CD4-positive, alpha-beta T cell (primary cell): ENCODE measurements at regions of chr1 and their contacts with region 1.

Region 1: DNA sequence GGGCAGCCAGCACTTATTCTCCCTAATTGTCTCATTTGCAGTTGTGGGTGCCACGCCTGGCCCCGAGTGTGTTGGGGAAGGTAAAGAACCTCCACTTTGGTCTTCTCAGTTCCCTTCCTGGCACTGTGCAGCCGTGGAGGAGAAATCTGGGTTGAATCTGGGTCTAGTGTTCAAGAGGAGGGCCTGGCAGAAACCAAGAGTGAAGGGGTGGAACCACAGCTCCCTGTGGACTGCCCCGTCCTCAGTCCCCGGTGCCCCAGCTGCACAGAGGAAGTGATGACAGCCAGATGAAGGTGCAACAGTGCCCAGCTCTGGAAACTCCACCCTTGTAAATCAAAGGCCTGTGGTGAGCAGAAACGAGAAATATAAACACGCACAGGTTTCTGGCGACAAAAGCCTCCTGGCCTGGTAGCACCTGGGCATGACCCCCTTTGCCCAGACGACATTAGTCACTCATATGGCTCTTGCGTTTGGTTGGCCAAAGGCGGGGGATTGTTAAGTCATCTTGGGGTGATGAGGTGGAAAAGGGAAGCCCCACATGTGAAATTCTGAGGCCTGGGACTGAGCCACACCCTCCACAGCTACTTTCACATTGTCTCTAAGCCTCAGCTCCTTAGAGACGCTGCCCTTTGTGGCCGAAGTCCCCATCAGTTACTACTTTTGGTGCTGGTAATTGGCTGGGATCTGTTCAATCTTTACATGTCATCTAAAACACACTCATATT is 4.2 kb upstream of the ECE1 start:
- DNase-seq: peak; percentile 74 to 98 (median 84)
- ATAC-seq: peak; percentile 75
- H3K4me3 ChIP-seq: peak overlapping the region; percentile 61
- H3K4me3 Mint-ChIP-seq: peak overlapping the region; percentile 88
- H3K27ac ChIP-seq: peak overlapping the region; percentile 89 to 95
- H3K27ac Mint-ChIP-seq: peak overlapping the region; percentile 96
- H3K4me1 ChIP-seq: peaks cover 94% of the 10 kb centered on the region
- H3K4me1 Mint-ChIP-seq: peaks cover 80% of the 10 kb centered on the region
- H3K27me3 ChIP-seq: no peaks in the 10 kb centered on the region
- H3K27me3 Mint-ChIP-seq: no peaks in the 10 kb centered on the region
- CTCF ChIP-seq: no peak

Region 2: GRCh38 chr1:20896871-20897223 is 397.6 kb before region 1 on chr1:
- CTCF ChIA-PET with region 1: no interaction called
- POLR2A ChIA-PET with region 1: no interaction called
- intact Hi-C with region 1: no loop called
- DNase-seq: no peak
- ATAC-seq: no peak
- H3K4me3 ChIP-seq: no peak overlapping the region
- H3K4me3 Mint-ChIP-seq: no peak overlapping the region
- H3K27ac ChIP-seq: no peak overlapping the region
- H3K27ac Mint-ChIP-seq: no peak overlapping the region
- H3K4me1 ChIP-seq: no peaks in the 10 kb centered on the region
- H3K4me1 Mint-ChIP-seq: no peaks in the 10 kb centered on the region
- H3K27me3 ChIP-seq: no peaks in the 10 kb centered on the region
- H3K27me3 Mint-ChIP-seq: no peaks in the 10 kb centered on the region
- CTCF ChIP-seq: no peak

Region 3: DNA sequence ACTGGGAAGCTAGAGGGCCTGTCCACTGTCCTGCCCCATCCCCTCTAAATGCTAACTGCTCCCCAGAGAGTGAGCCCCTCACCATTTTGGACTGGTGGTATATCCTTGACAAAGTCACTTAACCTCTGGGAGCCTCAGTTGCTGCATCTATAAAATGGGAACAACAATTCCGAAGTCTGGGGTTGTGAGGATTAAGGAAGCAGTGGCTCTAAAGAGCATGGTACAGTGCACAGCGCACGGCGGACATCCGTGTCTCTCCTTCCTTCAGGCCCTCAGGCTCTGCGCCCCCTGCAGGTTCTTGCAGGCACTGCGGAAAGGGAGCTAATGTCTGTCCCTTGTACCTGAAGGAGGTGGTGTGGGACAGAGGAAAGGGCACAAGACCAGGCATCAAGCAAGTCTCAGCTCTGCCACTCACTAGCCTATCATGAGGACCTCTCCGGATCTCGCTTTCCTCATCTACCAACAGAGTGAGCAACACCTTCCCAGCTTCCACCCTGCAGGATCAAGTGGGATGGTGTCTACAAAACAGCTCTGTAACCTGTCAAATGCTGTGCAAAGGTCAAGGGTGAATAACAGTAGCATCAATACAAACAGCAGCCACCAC is 24.2 kb before region 1 on chr1:
- CTCF ChIA-PET with region 1: interaction called, 80 read pairs
- POLR2A ChIA-PET with region 1: interaction called, 42 read pairs
- intact Hi-C with region 1: no loop called
- DNase-seq: peak; percentile 78 to 89 (median 84)
- ATAC-seq: peak; percentile 93
- H3K4me3 ChIP-seq: no peak overlapping the region
- H3K4me3 Mint-ChIP-seq: no peak overlapping the region
- H3K27ac ChIP-seq: no peak overlapping the region
- H3K27ac Mint-ChIP-seq: peak overlapping the region; percentile 9
- H3K4me1 ChIP-seq: peaks cover 17% of the 10 kb centered on the region
- H3K4me1 Mint-ChIP-seq: peaks cover 33% of the 10 kb centered on the region
- H3K27me3 ChIP-seq: no peaks in the 10 kb centered on the region
- H3K27me3 Mint-ChIP-seq: no peaks in the 10 kb centered on the region
- CTCF ChIP-seq: peak; percentile 89

Region 4: GRCh38 chr1:21308847-21309652 is 14.6 kb after region 1 on chr1:
- CTCF ChIA-PET with region 1: no interaction called
- POLR2A ChIA-PET with region 1: interaction called, 21 read pairs
- intact Hi-C with region 1: no loop called
- DNase-seq: no peak
- ATAC-seq: no peak
- H3K4me3 ChIP-seq: no peak overlapping the region
- H3K4me3 Mint-ChIP-seq: no peak overlapping the region
- H3K27ac ChIP-seq: no peak overlapping the region
- H3K27ac Mint-ChIP-seq: peak overlapping the region; percentile 55
- H3K4me1 ChIP-seq: peaks cover 67% of the 10 kb centered on the region
- H3K4me1 Mint-ChIP-seq: peaks cover 77% of the 10 kb centered on the region
- H3K27me3 ChIP-seq: no peaks in the 10 kb centered on the region
- H3K27me3 Mint-ChIP-seq: no peaks in the 10 kb centered on the region
- CTCF ChIP-seq: no peak

Region 5: DNA sequence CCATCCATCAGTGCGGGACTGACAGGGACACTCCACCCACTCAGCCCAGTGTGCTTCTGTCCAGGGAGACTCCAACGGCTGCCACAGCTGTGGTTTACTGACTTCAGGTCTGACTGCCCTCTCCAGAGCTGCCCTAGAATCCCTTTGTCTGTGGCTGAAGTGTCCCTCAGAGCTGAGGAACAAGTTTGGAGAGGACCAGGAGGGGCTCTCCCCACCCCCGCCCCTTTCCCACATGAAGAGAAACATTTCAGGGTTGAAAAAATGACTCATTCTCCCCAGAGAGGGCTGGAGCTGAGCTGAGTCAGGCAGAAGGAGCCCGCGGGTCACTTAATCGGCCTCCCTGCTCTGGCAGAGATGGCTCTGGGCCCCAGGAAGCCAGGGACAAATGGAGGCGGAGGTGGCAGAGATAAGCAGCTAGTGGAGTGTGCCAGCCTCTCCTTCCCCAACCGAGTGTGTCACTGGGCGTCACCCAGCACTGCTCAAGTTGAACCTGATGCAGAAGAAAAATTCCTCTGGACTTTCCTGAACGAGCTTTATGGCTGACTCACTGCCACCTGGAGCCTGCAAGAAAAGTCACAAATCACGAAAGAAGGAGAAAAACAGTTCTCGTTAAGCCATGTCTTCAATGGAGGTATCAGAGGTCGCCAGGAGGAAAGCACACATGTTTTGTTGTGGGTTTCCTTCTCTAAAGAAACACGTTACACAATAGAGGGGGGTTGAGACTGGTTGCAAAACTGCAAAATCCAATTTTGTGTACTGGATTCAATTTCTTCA is 30.1 kb after region 1 on chr1:
- CTCF ChIA-PET with region 1: interaction called, 8 read pairs
- POLR2A ChIA-PET with region 1: interaction called, 205 read pairs
- intact Hi-C with region 1: loop called (anchors 1 to 2 kb)
- DNase-seq: peak in 12 of 14 experiments; percentile 35 to 83 (median 52)
- ATAC-seq: peak; percentile 65
- H3K4me3 ChIP-seq: peak overlapping the region; percentile 24
- H3K4me3 Mint-ChIP-seq: peak overlapping the region; percentile 70
- H3K27ac ChIP-seq: peak overlapping the region; percentile 73 to 76
- H3K27ac Mint-ChIP-seq: peak overlapping the region; percentile 93
- H3K4me1 ChIP-seq: peaks cover 77% of the 10 kb centered on the region
- H3K4me1 Mint-ChIP-seq: peaks cover 88% of the 10 kb centered on the region
- H3K27me3 ChIP-seq: no peaks in the 10 kb centered on the region
- H3K27me3 Mint-ChIP-seq: no peaks in the 10 kb centered on the region
- CTCF ChIP-seq: no peak

Region 6: DNA sequence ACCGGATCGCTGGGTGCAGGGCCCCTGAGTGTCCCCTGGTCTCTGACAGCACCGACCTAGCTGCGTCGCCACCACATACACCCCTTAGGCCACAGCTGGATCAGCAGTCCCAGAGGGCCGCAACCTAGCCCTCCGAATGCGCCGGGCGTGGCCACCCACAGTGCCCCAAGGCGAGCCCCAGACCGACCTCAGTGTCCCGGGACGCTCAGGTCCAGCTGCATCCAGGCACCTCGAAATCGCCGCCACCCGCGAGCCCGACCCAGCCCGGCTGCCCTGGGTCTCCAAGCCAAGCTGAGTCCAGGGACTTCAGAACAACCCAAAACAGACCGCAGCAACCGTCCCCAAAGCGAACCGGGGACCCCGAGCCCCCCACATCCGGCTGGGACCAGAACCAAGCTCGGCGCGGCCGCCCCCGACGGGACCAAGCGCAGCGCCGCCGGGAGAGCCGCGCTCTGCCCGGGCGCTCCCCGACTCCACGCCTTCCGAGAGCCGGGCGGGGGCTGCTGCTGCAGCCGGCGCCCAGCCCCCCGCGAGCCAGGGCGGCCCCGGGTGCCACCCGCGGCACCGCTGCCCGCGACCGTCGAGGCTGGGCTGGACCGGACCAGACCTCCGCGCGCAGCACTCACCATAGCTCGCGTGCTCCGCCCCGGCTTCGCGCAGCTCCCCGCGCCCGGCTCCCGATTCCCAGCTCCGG is 50.5 kb after region 1 on chr1:
- CTCF ChIA-PET with region 1: interaction called, 3 read pairs
- POLR2A ChIA-PET with region 1: interaction called, 114 read pairs
- intact Hi-C with region 1: loop called (anchors 2 to 5 kb)
- DNase-seq: peak in 1 of 14 experiments; percentile 42
- ATAC-seq: peak; percentile 16
- H3K4me3 ChIP-seq: peak overlapping the region; percentile 91
- H3K4me3 Mint-ChIP-seq: peak overlapping the region; percentile 89
- H3K27ac ChIP-seq: no peak overlapping the region
- H3K27ac Mint-ChIP-seq: peak overlapping the region; percentile 86
- H3K4me1 ChIP-seq: peaks cover 63% of the 10 kb centered on the region
- H3K4me1 Mint-ChIP-seq: peaks cover 47% of the 10 kb centered on the region
- H3K27me3 ChIP-seq: no peaks in the 10 kb centered on the region
- H3K27me3 Mint-ChIP-seq: no peaks in the 10 kb centered on the region
- CTCF ChIP-seq: no peak